ENCODE measurements at regions of chr1 and their contacts with region 1.

Region 1: DNA sequence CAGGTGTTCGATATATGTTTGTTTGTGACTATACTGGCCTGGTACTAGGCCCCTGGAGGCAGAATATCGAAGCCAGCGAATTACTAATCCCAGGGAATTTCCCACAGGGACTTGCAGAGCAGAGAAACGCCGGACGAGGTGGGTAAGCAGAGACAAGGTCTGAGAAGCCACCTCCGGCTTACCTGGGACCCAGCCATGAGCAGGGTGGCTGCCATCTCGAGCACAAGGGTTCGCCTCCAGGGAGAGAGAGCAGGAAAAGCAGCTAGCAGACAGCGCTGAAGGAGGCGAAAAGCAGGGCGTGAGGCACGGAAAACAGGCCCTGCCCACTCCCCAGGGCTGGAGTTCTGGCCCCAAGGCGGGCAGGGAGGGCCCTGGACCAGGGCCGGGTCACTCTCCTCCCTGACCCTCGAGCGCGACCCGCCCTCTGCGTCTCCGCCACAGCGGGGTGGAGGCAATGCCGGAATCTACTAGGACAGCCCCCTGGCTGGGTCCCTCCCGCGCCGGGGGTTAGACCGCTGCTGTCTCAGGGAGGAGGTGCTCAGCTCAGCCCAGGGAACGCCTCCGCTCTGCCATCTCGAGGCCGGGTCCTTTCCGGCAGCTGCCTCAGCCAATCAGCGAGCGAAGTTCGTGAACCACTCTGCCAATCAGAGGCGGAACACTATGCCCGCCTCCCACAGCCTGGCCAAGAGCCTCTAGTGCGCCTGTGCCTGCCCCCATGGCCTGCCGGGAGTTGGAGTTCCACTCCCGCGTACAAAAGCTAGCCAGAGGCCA is 1.7 kb downstream of the ZNF436 start:
- DNase-seq: peak; percentile 98
- H3K4me3 ChIP-seq: peak overlapping the region; percentile 55 to 83 (median 79)
- H3K27ac ChIP-seq: peak overlapping the region; percentile 86
- H3K4me1 ChIP-seq: peaks cover 44% of the 10 kb centered on the region
- H3K27me3 ChIP-seq: no peaks in the 10 kb centered on the region
- CTCF ChIP-seq: no peak

Region 2: DNA sequence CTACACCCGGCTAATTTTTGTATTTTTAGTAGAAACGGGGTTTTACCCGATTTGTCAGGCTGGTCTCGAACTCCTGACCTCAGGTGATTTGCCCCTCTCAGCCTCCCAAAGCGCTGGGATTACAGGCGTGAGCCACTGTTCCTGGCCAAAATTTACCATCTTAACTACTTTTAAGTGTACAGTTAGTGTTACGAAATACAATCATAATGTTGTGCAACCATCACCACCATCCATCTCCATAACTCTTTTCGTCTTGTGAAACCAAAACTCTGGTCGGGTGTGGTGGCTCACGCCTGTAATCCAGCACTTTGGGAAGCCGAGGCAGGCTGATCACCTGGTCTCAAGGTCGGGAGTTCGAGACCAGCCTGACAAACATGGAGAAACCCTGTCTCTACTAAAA is 930.4 kb before region 1 on chr1:
- CTCF ChIA-PET with region 1: no interaction called
- dilution Hi-C with region 1: no loop called
- in situ Hi-C with region 1: no loop called
- intact Hi-C with region 1: no loop called
- DNase-seq: no peak
- H3K4me3 ChIP-seq: no peak overlapping the region
- H3K27ac ChIP-seq: no peak overlapping the region
- H3K4me1 ChIP-seq: no peaks in the 10 kb centered on the region
- H3K27me3 ChIP-seq: no peaks in the 10 kb centered on the region
- CTCF ChIP-seq: no peak

Region 3: DNA sequence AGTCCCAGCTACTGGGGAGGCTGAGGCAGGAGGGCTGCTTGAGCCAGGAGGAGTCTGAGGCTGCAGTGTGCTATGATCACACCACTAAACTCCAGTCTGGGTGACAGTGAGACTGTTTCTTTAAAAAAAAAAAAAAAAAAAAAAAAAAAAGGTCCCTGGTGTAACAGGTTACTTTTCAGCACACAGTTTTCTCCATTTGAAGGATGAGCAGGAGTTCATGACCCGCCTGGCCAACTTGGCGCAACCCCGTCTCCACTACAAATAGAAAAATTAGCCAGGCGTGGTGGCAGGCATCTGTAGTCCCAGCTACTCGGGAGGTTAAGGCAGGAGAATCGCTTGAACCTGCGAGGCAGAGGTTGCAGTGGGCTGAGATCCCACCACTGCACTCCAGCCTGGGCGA is 36.3 kb before region 1 on chr1:
- CTCF ChIA-PET with region 1: interaction called, 19 read pairs
- dilution Hi-C with region 1: no loop called
- in situ Hi-C with region 1: no loop called
- intact Hi-C with region 1: no loop called
- DNase-seq: no peak
- H3K4me3 ChIP-seq: no peak overlapping the region
- H3K27ac ChIP-seq: no peak overlapping the region
- H3K4me1 ChIP-seq: no peaks in the 10 kb centered on the region
- H3K27me3 ChIP-seq: no peaks in the 10 kb centered on the region
- CTCF ChIP-seq: no peak

Region 4: GRCh38 chr1:23344111-23344986 is 23.6 kb before region 1 on chr1 and contains the start of gene HNRNPR:
- CTCF ChIA-PET with region 1: no interaction called
- dilution Hi-C with region 1: no loop called
- in situ Hi-C with region 1: no loop called
- intact Hi-C with region 1: loop called (anchors 1 kb)
- DNase-seq: peak; percentile 100
- H3K4me3 ChIP-seq: peak within 1 kb of the TSS; percentile 78 to 89 (median 83)
- H3K27ac ChIP-seq: peak within 1 kb of the TSS; percentile 88
- H3K4me1 ChIP-seq: peaks cover 15% of the 10 kb centered on the region
- H3K27me3 ChIP-seq: no peaks in the 10 kb centered on the region
- CTCF ChIP-seq: peak in 1 of 2 donors; percentile 13
- total RNA-seq, gene HNRNPR: 35.2 to 133 TPM

Region 5: GRCh38 chr1:23484253-23485001 is 116.5 kb after region 1 on chr1:
- CTCF ChIA-PET with region 1: no interaction called
- dilution Hi-C with region 1: no loop called
- in situ Hi-C with region 1: no loop called
- intact Hi-C with region 1: loop called (anchors 5 kb)
- DNase-seq: peak; percentile 88
- H3K4me3 ChIP-seq: peak overlapping the region; percentile 23 to 83 (median 68)
- H3K27ac ChIP-seq: peak overlapping the region; percentile 29
- H3K4me1 ChIP-seq: peaks cover 9% of the 10 kb centered on the region
- H3K27me3 ChIP-seq: no peaks in the 10 kb centered on the region
- CTCF ChIP-seq: no peak

Region 6: DNA sequence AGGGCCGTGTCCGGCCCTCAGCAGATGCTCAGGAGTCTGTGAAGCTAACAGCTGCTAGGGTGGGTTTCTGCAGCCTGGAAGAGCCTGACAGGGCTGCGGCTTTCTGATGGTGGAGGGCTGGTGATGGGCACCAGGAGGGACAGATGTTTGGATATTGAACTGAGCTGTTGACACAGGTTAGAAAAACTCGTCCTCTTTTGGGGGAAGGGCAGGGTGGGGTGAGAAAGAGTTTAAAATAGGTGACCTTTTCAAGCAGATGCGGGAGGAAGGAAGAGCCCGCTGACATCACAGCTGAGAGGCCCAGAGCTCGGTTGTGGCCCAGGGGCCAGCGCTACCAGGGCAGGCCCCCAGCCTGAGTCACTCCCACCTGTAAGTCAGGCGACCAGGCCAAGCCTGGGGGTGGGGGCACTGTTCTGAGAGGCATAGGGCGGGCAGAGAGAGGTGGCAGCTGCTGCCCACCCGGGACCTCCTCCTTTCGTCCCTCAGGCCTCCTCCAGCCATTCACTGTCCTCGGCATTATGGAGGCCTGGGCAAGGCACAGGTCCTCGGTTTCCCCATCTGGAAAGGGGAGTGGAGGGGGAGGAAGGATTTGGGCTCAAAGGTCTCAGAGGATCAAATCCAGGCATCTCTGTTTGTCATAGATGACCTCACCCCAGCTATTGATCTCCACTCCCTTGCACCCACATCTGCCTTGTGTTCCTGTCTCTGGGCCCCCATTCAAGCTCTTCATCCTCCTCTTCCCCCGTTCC is 223.7 kb after region 1 on chr1:
- CTCF ChIA-PET with region 1: no interaction called
- dilution Hi-C with region 1: no loop called
- in situ Hi-C with region 1: no loop called
- intact Hi-C with region 1: loop called (anchors 5 kb)
- DNase-seq: no peak
- H3K4me3 ChIP-seq: no peak overlapping the region
- H3K27ac ChIP-seq: peak overlapping the region; percentile 81
- H3K4me1 ChIP-seq: peaks cover 58% of the 10 kb centered on the region
- H3K27me3 ChIP-seq: no peaks in the 10 kb centered on the region
- CTCF ChIP-seq: no peak

Measured in mammary epithelial cell (primary cell).